Ovary (tissue), 10 donors: ENCODE measurements at regions of chr12 and their contacts with region 1.

Region 1: GRCh38 chr12:114809097-114809496 is 125.1 kb upstream of the TBX3 start:
- DNase-seq: no peak
- H3K4me3 ChIP-seq: no peak overlapping the region
- H3K27ac ChIP-seq: no peak overlapping the region
- H3K4me1 ChIP-seq: peaks cover 3% of the 10 kb centered on the region
- H3K27me3 ChIP-seq: no peaks in the 10 kb centered on the region
- CTCF ChIP-seq: no peak
- EP300 ChIP-seq: no peak
- POLR2A ChIP-seq: no peak

Region 2: GRCh38 chr12:114744691-114745090 is 64.4 kb before region 1 on chr12:
- intact Hi-C with region 1: loop called in 1 of 4 experiments (anchors 5 kb)
- DNase-seq: peak; percentile 39 to 71 (median 65)
- H3K4me3 ChIP-seq: no peak overlapping the region
- H3K27ac ChIP-seq: peak overlapping the region in 1 of 2 donors; percentile 41
- H3K4me1 ChIP-seq: peaks cover 5% of the 10 kb centered on the region
- H3K27me3 ChIP-seq: no peaks in the 10 kb centered on the region
- CTCF ChIP-seq: no peak
- EP300 ChIP-seq: no peak
- POLR2A ChIP-seq: no peak

Region 3: DNA sequence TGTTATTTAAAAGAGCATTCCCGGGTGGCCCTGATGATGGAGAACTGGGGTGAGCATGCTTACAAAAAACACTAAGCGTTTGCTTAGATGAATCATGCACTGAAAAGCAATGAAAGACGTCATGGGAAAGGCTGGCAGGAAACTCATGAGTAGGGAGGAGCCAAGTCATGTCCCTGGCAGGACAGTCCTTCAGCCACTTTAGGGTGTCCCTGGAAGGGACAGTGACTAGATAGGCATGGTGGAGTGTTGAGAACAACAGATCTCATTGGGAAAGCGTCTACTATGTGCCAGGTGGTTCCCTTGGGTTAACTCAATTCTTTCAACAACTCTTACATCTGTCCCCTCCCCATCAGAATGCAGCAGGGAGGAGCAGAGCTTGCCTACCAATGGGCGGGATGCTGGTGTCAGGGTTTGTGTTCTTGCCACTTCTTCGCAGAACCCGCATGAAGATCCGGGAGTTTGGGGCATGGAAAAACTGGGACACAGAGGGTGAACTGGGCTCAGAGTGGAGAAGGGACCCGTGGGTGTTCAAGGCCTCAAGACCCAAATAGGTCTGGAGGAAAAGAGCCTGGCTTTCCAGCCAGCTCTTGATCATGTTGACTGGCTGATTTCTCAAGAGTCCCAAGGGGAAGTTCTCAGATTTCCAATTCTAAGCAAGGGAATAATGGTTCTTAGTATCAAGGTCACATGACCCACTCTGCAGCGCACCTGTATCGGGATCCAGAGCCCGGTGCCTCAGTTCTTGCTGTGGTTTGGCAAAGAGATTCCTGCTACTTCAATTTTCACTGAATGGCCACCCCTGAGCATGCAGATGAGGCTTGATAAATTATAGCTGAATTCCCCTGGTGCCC is 528.8 kb after region 1 on chr12:
- intact Hi-C with region 1: no loop called
- DNase-seq: peak in 1 of 5 donors; percentile 31
- H3K4me3 ChIP-seq: no peak overlapping the region
- H3K27ac ChIP-seq: no peak overlapping the region
- H3K4me1 ChIP-seq: peaks cover 2% of the 10 kb centered on the region
- H3K27me3 ChIP-seq: no peaks in the 10 kb centered on the region
- CTCF ChIP-seq: no peak
- EP300 ChIP-seq: no peak
- POLR2A ChIP-seq: no peak